H1 (cell line): ENCODE measurements at regions of chr3 and their contacts with region 1.

Region 1: DNA sequence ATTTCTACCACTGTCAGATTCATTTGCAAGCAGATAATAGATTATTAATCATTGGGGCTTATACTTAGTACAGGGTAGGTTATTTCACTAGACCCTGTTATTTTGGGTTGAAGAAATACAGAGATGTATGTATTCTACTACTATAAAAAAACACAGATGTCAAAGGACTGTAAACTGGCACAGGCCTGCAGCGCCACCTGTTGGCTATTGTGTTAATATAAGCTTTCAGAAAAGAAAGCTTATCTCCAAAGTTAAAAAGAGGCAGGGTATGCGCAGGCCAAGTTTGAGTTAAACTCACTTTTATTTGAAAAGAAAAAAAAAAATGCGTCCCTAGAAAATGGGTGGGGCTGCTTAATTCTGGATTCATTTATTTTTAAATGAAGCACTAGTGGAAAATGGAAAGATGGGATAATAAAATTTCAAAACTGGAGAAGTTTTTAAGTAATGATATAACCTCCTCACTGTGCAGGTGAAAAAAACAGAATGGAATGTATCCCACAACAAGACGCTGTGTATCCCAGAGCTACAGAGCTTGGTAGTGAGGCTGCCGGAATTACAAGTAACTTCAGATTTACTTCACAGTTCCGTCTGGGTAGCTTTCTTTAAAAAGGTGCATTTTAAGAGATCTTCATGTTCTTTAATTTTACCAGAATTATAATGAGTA is 407.2 kb upstream of the TGFBR2 start:
- DNase-seq: peak; percentile 7 to 69
- H3K4me3 ChIP-seq: no peak overlapping the region
- H3K27ac ChIP-seq: no peak overlapping the region
- H3K4me1 ChIP-seq: no peaks in the 10 kb centered on the region
- H3K27me3 ChIP-seq: no peaks in the 10 kb centered on the region
- CTCF ChIP-seq: peak in 2 of 3 experiments; percentile 53 to 69; a peak in 3 of 4 replicates
- EP300 ChIP-seq: no peak
- POLR2A ChIP-seq: no peak
- RAD21 ChIP-seq: peak; percentile 86 to 87

Region 2: GRCh38 chr3:30042274-30042859 is 156.9 kb before region 1 on chr3:
- CTCF ChIA-PET with region 1: interaction called, 87 read pairs
- POLR2A ChIA-PET with region 1: no interaction called
- DNase-seq: peak in 1 of 2 experiments; percentile 57
- H3K4me3 ChIP-seq: no peak overlapping the region
- H3K27ac ChIP-seq: no peak overlapping the region
- H3K4me1 ChIP-seq: peaks cover 0 to 5% (median 0%) of the 10 kb centered on the region in 4 experiments; a peak in 2 of 7 replicates
- H3K27me3 ChIP-seq: no peaks in the 10 kb centered on the region
- CTCF ChIP-seq: peak in 2 of 3 experiments; percentile 68 to 70; a peak in 3 of 4 replicates
- EP300 ChIP-seq: no peak
- POLR2A ChIP-seq: no peak
- RAD21 ChIP-seq: peak; percentile 90 to 93

Region 3: DNA sequence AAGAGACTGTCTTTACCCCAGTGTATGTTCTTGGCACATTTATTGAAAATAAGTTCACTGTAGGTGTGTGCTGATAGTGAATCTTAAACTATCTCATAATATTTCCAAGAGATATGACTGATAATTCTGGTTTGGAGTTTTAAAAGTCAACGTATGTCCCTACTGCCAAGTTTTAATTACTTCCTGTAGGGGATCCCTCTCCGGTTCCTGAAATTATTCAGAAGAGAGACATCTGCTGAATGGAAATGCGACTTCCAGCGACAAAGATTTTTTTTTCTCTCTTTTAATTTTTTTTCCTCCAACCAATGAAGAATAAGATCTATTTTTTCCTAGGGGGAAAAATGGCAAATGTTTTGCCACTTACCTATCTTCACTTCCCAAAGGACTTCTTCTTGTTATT is 91.7 kb before region 1 on chr3:
- CTCF ChIA-PET with region 1: interaction called, 32 read pairs
- POLR2A ChIA-PET with region 1: no interaction called
- DNase-seq: no peak
- H3K4me3 ChIP-seq: no peak overlapping the region
- H3K27ac ChIP-seq: no peak overlapping the region
- H3K4me1 ChIP-seq: no peaks in the 10 kb centered on the region
- H3K27me3 ChIP-seq: no peaks in the 10 kb centered on the region
- CTCF ChIP-seq: no peak
- EP300 ChIP-seq: no peak
- POLR2A ChIP-seq: no peak
- RAD21 ChIP-seq: no peak

Region 4: GRCh38 chr3:30135190-30135589 is 64.0 kb before region 1 on chr3:
- CTCF ChIA-PET with region 1: interaction called, 20 read pairs
- POLR2A ChIA-PET with region 1: no interaction called
- DNase-seq: no peak
- H3K4me3 ChIP-seq: no peak overlapping the region
- H3K27ac ChIP-seq: no peak overlapping the region
- H3K4me1 ChIP-seq: no peaks in the 10 kb centered on the region
- H3K27me3 ChIP-seq: no peaks in the 10 kb centered on the region
- CTCF ChIP-seq: peak in 2 of 3 experiments; percentile 20 to 34; a peak in 2 of 4 replicates
- EP300 ChIP-seq: no peak
- POLR2A ChIP-seq: no peak
- RAD21 ChIP-seq: peak; percentile 62 to 64

Region 5: GRCh38 chr3:30180310-30181177 is 18.7 kb before region 1 on chr3:
- CTCF ChIA-PET with region 1: interaction called, 11 read pairs
- POLR2A ChIA-PET with region 1: no interaction called
- DNase-seq: no peak
- H3K4me3 ChIP-seq: no peak overlapping the region
- H3K27ac ChIP-seq: no peak overlapping the region
- H3K4me1 ChIP-seq: no peaks in the 10 kb centered on the region
- H3K27me3 ChIP-seq: no peaks in the 10 kb centered on the region
- CTCF ChIP-seq: no peak
- EP300 ChIP-seq: no peak
- POLR2A ChIP-seq: no peak
- RAD21 ChIP-seq: no peak

Region 6: DNA sequence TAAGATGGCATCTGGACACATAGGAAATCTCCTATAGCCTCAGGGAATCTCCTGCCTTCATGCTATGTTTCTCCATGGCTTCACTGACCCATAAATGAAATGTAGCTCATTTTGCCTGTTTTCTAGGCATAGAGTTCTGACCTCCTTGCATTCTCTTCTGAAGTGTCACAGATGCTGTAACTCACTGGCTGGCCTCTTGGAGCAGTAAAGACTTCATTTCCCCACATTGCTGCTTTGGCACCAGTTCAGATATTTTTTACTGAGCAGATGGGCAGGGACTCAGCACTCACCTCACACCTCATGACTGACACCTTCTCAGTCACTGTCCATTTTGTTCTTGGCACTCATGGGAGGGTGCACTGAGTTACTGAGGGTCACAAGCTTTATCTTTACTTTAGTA is 120.5 kb after region 1 on chr3:
- CTCF ChIA-PET with region 1: interaction called, 13 read pairs
- POLR2A ChIA-PET with region 1: no interaction called
- DNase-seq: peak; percentile 7 to 43
- H3K4me3 ChIP-seq: no peak overlapping the region
- H3K27ac ChIP-seq: no peak overlapping the region
- H3K4me1 ChIP-seq: peaks cover 0 to 5% (median 0%) of the 10 kb centered on the region in 4 experiments; a peak in 1 of 7 replicates
- H3K27me3 ChIP-seq: no peaks in the 10 kb centered on the region
- CTCF ChIP-seq: peak in 2 of 3 experiments; percentile 59 to 74; a peak in 3 of 4 replicates
- EP300 ChIP-seq: no peak
- POLR2A ChIP-seq: no peak
- RAD21 ChIP-seq: peak; percentile 68 to 78

Region 7: DNA sequence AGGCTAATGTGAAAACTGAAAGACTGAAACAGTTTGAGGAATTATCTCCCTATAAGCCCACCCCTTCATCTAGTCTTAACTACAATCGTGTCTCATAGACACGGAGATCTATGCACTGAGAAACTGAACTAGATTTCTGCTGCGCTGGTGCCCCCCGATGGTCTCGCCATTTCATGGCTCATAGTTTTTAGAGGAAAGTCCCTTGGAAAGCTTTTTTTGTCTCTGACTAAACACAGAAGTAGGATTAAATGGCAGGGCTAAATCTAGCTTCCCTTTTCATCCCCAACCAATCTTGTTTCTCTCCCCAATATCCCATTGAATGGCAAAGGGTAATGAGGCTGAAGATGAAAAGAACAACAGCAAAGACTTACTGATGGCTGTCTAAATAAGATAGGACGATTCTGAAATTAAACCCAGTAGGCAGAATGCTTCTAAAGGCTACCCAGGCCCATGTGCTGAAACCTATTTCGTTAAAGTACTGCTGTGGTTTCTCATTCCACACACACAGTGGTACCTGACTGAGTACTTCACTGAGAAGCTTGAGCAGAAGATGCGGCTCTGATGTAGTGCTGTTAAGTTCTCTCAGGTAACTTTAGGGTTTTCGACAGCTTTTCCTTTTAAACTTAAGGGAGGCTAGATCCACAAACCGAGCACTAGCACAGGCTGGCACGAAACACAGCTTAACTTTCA is 552.5 kb after region 1 on chr3:
- CTCF ChIA-PET with region 1: interaction called, 18 read pairs
- POLR2A ChIA-PET with region 1: no interaction called
- DNase-seq: peak in 1 of 2 experiments; percentile 63
- H3K4me3 ChIP-seq: no peak overlapping the region; a peak in 1 of 8 replicates
- H3K27ac ChIP-seq: no peak overlapping the region
- H3K4me1 ChIP-seq: peaks cover 0 to 15% (median 1%) of the 10 kb centered on the region in 4 experiments; a peak in 2 of 7 replicates
- H3K27me3 ChIP-seq: no peaks in the 10 kb centered on the region
- CTCF ChIP-seq: peak; percentile 10 to 58 (median 56)
- EP300 ChIP-seq: no peak
- POLR2A ChIP-seq: no peak
- RAD21 ChIP-seq: peak; percentile 77 to 88

Region 8: GRCh38 chr3:30779686-30780287 is 580.6 kb after region 1 on chr3:
- CTCF ChIA-PET with region 1: no interaction called
- POLR2A ChIA-PET with region 1: no interaction called
- DNase-seq: peak in 1 of 2 experiments; percentile 48
- H3K4me3 ChIP-seq: no peak overlapping the region
- H3K27ac ChIP-seq: no peak overlapping the region
- H3K4me1 ChIP-seq: no peaks in the 10 kb centered on the region
- H3K27me3 ChIP-seq: no peaks in the 10 kb centered on the region
- CTCF ChIP-seq: peak; percentile 2 to 71 (median 66)
- EP300 ChIP-seq: no peak
- POLR2A ChIP-seq: no peak
- RAD21 ChIP-seq: peak; percentile 87 to 89